KBM-7 (cell line): ENCODE measurements at regions of chr13 and their contacts with region 1.

Region 1: DNA sequence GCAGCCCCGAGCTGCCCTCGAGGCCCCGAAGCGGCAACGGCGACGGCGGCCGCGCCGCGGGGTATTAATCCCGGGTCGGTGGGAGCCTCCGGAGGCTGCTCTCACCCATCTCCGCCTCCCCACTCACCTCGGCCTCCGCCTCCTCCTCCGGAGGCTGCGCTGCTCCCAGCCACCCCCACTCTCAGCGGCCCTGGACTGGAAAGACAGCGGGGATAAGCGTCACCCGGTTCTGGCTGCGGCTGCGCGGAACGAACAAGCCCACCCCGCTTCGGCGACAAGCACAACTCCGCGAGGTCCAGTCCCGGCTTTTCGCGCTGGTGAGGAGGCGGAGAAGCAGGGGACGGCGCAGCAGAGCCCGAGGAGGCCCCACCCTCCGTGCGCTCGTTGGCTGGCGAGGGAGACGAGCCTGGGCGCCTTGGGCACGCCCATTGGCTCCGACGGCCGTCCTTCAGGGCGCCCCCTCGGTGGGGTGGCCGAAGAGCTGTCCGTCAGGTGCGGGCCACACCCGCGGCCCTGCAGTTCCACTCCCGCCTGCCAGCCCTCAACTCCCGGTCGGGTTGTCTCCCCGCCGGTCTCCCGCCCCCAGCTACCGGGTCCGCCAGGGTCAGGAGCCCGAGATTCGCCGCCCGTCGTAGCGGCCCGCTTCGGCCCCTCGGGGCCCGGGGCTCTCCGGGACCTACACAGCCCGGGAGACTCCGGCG is at the start of gene ZMYM5:
- DNase-seq: peak; percentile 99

Region 2: DNA sequence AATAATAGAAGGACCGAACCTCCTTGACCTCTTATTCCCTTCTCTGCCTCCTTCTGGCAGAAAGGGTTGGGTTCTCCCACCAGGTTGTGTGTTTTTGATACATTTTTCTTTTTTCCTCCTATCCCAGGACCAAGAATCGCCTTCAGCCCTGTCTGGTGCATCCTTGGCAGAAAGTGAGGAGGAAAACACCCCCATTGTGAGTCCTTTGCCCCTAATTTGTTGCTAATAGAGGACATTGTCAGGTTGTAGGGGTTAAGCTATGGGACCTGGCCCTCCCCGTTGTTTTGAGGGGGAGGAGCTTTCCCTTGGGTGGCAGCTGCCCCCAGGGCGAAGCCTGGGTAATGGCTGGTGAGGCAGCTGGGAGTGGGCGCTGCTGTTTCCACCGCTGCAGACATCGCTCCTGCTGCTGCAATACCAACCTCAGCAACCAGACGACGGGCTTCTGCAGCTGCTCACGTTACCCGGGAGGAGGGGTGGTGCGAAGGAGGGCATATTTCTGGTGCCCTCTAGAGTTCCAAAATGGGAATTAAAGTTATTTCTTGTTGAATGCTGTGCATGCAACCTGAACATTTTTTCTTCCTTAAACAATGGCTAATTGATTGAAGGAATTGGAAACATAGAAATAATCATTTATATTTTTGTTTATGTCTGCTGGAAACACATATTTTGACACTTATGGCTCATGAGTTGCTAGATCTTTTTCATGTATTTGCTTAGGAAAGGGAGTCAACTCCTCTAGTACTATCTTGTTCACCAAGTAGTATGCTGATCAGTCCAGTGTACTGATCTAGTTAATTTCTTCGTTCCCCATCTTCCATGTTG is 96.6 kb after region 1 on chr13:
- in situ Hi-C with region 1: loop called (anchors 25 kb)
- DNase-seq: peak; percentile 94